ENCODE measurements at regions of chr3 and their contacts with region 1.

Region 1: DNA sequence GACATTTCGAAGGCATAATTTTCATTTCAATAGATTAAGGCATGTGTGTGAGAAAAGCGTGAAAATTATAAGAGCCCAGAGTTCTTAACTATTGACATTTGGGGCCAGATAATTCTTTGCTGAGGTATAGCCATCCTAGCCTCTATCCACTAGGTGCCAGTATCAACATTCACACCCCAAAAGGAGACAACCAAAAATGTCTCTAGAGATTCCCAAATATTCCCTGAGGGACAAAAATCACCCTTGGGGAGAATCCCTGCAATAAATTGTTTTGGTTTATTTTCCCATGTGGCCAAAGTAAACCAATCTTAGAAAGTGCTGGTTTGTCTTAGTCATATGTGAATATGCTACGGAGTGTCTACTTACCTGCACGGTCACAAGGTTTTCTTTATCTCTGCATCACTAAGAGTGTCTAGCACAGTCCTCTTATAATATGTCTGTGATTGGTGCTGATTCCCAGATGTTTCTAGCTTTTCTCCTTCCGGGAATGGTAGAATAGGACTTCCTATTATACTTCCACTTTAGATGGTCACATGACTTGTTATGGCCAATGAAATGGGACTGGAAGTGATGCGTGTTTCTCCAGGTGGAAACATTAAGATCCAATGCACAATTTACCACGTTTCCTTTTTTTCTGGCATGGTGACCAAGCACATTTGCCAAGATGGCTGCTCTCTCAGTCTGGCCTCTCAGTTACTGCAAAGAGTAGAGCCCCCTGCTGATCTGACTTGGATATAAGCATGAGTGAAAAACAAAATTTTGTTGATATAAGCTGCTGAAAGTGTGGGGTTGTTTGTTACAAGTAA is 8.0 kb upstream of the KBTBD8 start:
- DNase-seq: peak; percentile 58
- ATAC-seq: peak; percentile 83
- H3K4me3 ChIP-seq: peak overlapping the region in 4 of 5 experiments; percentile 36 to 61 (median 54)
- H3K4me3 Mint-ChIP-seq: peak overlapping the region; percentile 93
- H3K27ac ChIP-seq: peak overlapping the region in 1 of 2 donors; percentile 37
- H3K27ac Mint-ChIP-seq: peak overlapping the region; percentile 88
- H3K4me1 ChIP-seq: no peaks in the 10 kb centered on the region
- H3K4me1 Mint-ChIP-seq: peaks cover 7% of the 10 kb centered on the region
- H3K27me3 ChIP-seq: no peaks in the 10 kb centered on the region
- H3K27me3 Mint-ChIP-seq: peaks cover 4% of the 10 kb centered on the region
- CTCF ChIP-seq: peak; percentile 63

Region 2: GRCh38 chr3:66957367-66957766 is 32.7 kb before region 1 on chr3:
- CTCF ChIA-PET with region 1: no interaction called
- POLR2A ChIA-PET with region 1: no interaction called
- intact Hi-C with region 1: no loop called
- DNase-seq: no peak
- ATAC-seq: no peak
- H3K4me3 ChIP-seq: no peak overlapping the region
- H3K4me3 Mint-ChIP-seq: no peak overlapping the region
- H3K27ac ChIP-seq: no peak overlapping the region
- H3K27ac Mint-ChIP-seq: no peak overlapping the region
- H3K4me1 ChIP-seq: no peaks in the 10 kb centered on the region
- H3K4me1 Mint-ChIP-seq: no peaks in the 10 kb centered on the region
- H3K27me3 ChIP-seq: no peaks in the 10 kb centered on the region
- H3K27me3 Mint-ChIP-seq: peaks cover 18% of the 10 kb centered on the region
- CTCF ChIP-seq: no peak

Region 3: GRCh38 chr3:67037615-67038014 is 47.6 kb after region 1 on chr3:
- CTCF ChIA-PET with region 1: interaction called, 67 read pairs
- POLR2A ChIA-PET with region 1: no interaction called
- intact Hi-C with region 1: loop called (anchors 1 kb)
- DNase-seq: peak; percentile 42
- ATAC-seq: no peak
- H3K4me3 ChIP-seq: no peak overlapping the region
- H3K4me3 Mint-ChIP-seq: no peak overlapping the region
- H3K27ac ChIP-seq: no peak overlapping the region
- H3K27ac Mint-ChIP-seq: no peak overlapping the region
- H3K4me1 ChIP-seq: peaks cover 4 to 6% of the 10 kb centered on the region in 2 donors
- H3K4me1 Mint-ChIP-seq: peaks cover 6% of the 10 kb centered on the region
- H3K27me3 ChIP-seq: no peaks in the 10 kb centered on the region
- H3K27me3 Mint-ChIP-seq: no peaks in the 10 kb centered on the region
- CTCF ChIP-seq: no peak

Region 4: GRCh38 chr3:68876112-68876713 is 1886.2 kb after region 1 on chr3:
- CTCF ChIA-PET with region 1: interaction called, 16 read pairs
- POLR2A ChIA-PET with region 1: no interaction called
- intact Hi-C with region 1: no loop called
- DNase-seq: peak; percentile 65
- ATAC-seq: peak; percentile 51
- H3K4me3 ChIP-seq: no peak overlapping the region
- H3K4me3 Mint-ChIP-seq: no peak overlapping the region
- H3K27ac ChIP-seq: no peak overlapping the region
- H3K27ac Mint-ChIP-seq: no peak overlapping the region
- H3K4me1 ChIP-seq: no peaks in the 10 kb centered on the region
- H3K4me1 Mint-ChIP-seq: no peaks in the 10 kb centered on the region
- H3K27me3 ChIP-seq: no peaks in the 10 kb centered on the region
- H3K27me3 Mint-ChIP-seq: peaks cover 35% of the 10 kb centered on the region
- CTCF ChIP-seq: peak; percentile 98

Measured in B cell (primary cell).